PC-9 (cell line): ENCODE measurements at regions of chr13 and their contacts with region 1.

Region 1: GRCh38 chr13:45367358-45367757 is 26.4 kb upstream of the TPT1 start:
- DNase-seq: peak; percentile 93 to 95
- H3K4me3 ChIP-seq: no peak overlapping the region
- H3K27ac ChIP-seq: peak overlapping the region; percentile 90
- H3K4me1 ChIP-seq: peaks cover 31% of the 10 kb centered on the region
- H3K27me3 ChIP-seq: no peaks in the 10 kb centered on the region
- CTCF ChIP-seq: no peak

Region 2: GRCh38 chr13:45332036-45332830 is 35.1 kb before region 1 on chr13:
- CTCF ChIA-PET with region 1: no interaction called
- POLR2A ChIA-PET with region 1: interaction called, 4 read pairs
- intact Hi-C with region 1: loop called (anchors 5 kb)
- DNase-seq: peak; percentile 49 to 88
- H3K4me3 ChIP-seq: no peak overlapping the region
- H3K27ac ChIP-seq: peak overlapping the region; percentile 66
- H3K4me1 ChIP-seq: peaks cover 84% of the 10 kb centered on the region
- H3K27me3 ChIP-seq: no peaks in the 10 kb centered on the region
- CTCF ChIP-seq: no peak

Region 3: GRCh38 chr13:45349438-45349837 is 17.9 kb before region 1 on chr13:
- CTCF ChIA-PET with region 1: interaction called, 5 read pairs
- POLR2A ChIA-PET with region 1: interaction called, 28 read pairs
- intact Hi-C with region 1: loop called (anchors 1 kb)
- DNase-seq: no peak
- H3K4me3 ChIP-seq: no peak overlapping the region
- H3K27ac ChIP-seq: peak overlapping the region; percentile 12; the same call in 1 of the 2 replicates
- H3K4me1 ChIP-seq: no peaks in the 10 kb centered on the region
- H3K27me3 ChIP-seq: no peaks in the 10 kb centered on the region
- CTCF ChIP-seq: no peak

Region 4: DNA sequence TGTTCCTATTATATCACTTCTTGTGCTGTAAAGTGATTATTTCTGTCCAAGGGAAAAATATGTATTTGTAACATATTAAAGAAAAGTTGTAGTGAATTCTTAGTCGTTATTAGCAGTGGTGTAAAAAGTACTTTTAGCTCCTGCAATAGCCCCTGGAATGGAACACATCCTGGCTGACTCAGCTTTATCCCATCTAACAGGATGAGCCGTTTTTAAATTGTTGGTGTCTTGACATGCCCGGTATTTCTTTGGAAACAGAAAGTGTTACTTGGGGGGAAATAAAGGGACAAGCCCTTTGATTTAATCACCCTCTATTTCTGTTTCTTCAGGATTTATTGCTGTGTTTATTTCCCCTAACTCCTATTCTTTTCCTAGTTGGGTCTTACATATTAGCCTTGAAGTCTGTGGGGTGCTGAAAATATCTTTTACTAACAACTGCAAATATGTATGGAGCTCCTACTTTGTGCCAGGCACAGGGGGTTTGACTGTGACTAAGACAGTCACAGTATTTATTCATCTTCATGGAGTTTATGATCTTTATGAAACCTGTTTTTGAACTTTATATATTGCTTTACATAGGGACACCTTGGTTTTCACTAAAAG is 115.3 kb after region 1 on chr13:
- CTCF ChIA-PET with region 1: no interaction called
- POLR2A ChIA-PET with region 1: interaction called, 16 read pairs
- intact Hi-C with region 1: no loop called
- DNase-seq: no peak
- H3K4me3 ChIP-seq: no peak overlapping the region
- H3K27ac ChIP-seq: no peak overlapping the region; the same call in 1 of the 2 replicates
- H3K4me1 ChIP-seq: no peaks in the 10 kb centered on the region
- H3K27me3 ChIP-seq: no peaks in the 10 kb centered on the region
- CTCF ChIP-seq: no peak